ENCODE measurements at regions of chr9 and their contacts with region 1.

Region 1: GRCh38 chr9:108468402-108468801 is 387.4 kb downstream of the ACTL7B start:
- DNase-seq: peak; percentile 17 to 84
- H3K4me3 ChIP-seq: no peak overlapping the region
- H3K27ac ChIP-seq: no peak overlapping the region
- H3K4me1 ChIP-seq: 0 out of 7 replicates have a peak, but pooled peaks cover 0 to 2% (median 0%) of the 10 kb centered on the region in 4 experiments
- H3K27me3 ChIP-seq: no peaks in the 10 kb centered on the region
- CTCF ChIP-seq: peak in 2 of 3 experiments; percentile 60 to 73; a peak in 3 of 4 replicates
- EP300 ChIP-seq: no peak
- POLR2A ChIP-seq: no peak
- RAD21 ChIP-seq: peak; percentile 43 to 52

Region 2: DNA sequence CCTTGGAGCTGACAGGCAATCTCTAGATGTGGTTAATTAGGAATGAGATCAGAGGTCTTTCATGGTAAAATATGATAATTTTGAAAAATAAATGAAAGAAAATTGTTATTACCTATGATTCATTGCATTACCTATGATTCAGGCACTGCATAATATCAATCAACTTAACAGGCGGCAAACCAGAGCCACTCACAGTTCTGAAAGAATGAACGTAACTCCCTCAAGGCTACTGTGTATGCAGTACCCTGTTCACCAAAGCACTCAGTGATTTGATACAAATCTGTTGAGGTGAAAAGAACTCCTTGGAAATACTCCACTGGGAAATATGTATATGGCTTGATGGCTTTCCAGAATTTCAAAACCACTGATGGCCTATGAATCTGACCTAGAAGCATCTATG is 11.5 kb before region 1 on chr9:
- CTCF ChIA-PET with region 1: interaction called, 19 read pairs
- POLR2A ChIA-PET with region 1: no interaction called
- DNase-seq: no peak
- H3K4me3 ChIP-seq: no peak overlapping the region
- H3K27ac ChIP-seq: no peak overlapping the region
- H3K4me1 ChIP-seq: no peaks in the 10 kb centered on the region
- H3K27me3 ChIP-seq: no peaks in the 10 kb centered on the region
- CTCF ChIP-seq: no peak
- EP300 ChIP-seq: no peak
- POLR2A ChIP-seq: no peak
- RAD21 ChIP-seq: no peak

Region 3: GRCh38 chr9:108478431-108478837 is 10.0 kb after region 1 on chr9:
- CTCF ChIA-PET with region 1: interaction called, 13 read pairs
- POLR2A ChIA-PET with region 1: no interaction called
- DNase-seq: no peak
- H3K4me3 ChIP-seq: no peak overlapping the region
- H3K27ac ChIP-seq: no peak overlapping the region
- H3K4me1 ChIP-seq: peaks cover 0 to 4% (median 2%) of the 10 kb centered on the region in 4 experiments; a peak in 1 of 7 replicates
- H3K27me3 ChIP-seq: no peaks in the 10 kb centered on the region
- CTCF ChIP-seq: no peak
- EP300 ChIP-seq: no peak
- POLR2A ChIP-seq: no peak
- RAD21 ChIP-seq: no peak

Region 4: DNA sequence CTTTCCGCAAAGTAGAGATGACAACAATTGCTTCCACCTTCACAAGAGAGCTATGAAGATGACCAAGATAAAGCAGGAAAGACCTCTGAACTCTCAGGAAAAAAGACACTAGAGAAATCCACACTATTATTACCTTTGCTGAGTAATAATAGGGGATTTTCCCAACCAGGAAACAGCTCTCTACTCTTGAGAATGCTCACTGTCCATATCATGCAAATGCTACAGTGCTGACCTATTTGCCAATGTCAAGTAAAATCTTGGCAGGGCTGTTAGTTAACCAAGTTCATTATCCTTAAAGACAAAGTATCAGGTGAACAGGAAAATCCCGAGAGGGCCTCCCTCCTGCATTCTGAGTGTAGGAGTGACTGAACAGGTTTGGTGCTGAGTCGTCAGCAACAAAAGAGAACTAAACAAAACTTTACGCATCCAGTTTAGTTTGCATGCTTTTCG is 80.8 kb after region 1 on chr9:
- CTCF ChIA-PET with region 1: no interaction called
- POLR2A ChIA-PET with region 1: no interaction called
- DNase-seq: no peak
- H3K4me3 ChIP-seq: no peak overlapping the region
- H3K27ac ChIP-seq: no peak overlapping the region
- H3K4me1 ChIP-seq: no peaks in the 10 kb centered on the region
- H3K27me3 ChIP-seq: no peaks in the 10 kb centered on the region
- CTCF ChIP-seq: no peak
- EP300 ChIP-seq: no peak
- POLR2A ChIP-seq: no peak
- RAD21 ChIP-seq: no peak